CD8-positive, alpha-beta memory T cell (primary cell): ENCODE measurements at regions of chr15 and their contacts with region 1.

Region 1: DNA sequence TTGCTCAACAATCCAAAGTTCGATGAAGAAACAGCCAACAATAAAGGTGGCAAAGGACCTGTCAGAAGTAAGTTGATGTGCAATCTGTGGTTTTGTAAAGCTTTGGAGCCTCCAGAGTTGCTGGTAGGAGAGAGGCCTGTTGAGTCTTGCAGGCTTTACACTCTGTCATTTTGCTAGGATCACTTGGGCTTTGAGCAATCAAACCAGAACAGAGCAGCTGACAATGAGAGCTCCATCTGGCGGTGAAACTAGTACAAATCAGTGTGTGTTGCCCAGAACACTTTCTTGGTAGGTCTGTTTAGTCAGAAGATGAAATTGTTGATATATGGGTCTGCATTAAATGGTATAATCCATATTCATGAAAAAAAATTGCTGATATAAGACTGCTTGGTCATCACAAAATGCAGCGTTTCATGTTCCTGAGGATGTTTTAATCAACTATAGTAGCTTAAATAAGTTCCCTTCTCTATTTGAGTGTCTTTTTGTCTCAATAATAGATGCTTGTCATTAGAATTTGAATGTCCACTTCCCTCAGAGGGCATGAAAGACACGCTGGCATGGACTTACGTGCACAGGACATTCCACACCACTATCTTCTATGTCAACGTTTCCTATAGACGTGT is 25.7 kb downstream of the TMOD2 start:
- DNase-seq: peak; percentile 37 to 72 (median 47)
- H3K4me3 ChIP-seq: no peak overlapping the region
- H3K4me3 Mint-ChIP-seq: no peak overlapping the region
- H3K27ac ChIP-seq: no peak overlapping the region
- H3K27ac Mint-ChIP-seq: no peak overlapping the region
- H3K4me1 ChIP-seq: no peaks in the 10 kb centered on the region
- H3K4me1 Mint-ChIP-seq: peaks cover 5 to 11% (median 6%) of the 10 kb centered on the region in 3 donors
- H3K27me3 ChIP-seq: no peaks in the 10 kb centered on the region
- H3K27me3 Mint-ChIP-seq: no peaks in the 10 kb centered on the region

Region 2: DNA sequence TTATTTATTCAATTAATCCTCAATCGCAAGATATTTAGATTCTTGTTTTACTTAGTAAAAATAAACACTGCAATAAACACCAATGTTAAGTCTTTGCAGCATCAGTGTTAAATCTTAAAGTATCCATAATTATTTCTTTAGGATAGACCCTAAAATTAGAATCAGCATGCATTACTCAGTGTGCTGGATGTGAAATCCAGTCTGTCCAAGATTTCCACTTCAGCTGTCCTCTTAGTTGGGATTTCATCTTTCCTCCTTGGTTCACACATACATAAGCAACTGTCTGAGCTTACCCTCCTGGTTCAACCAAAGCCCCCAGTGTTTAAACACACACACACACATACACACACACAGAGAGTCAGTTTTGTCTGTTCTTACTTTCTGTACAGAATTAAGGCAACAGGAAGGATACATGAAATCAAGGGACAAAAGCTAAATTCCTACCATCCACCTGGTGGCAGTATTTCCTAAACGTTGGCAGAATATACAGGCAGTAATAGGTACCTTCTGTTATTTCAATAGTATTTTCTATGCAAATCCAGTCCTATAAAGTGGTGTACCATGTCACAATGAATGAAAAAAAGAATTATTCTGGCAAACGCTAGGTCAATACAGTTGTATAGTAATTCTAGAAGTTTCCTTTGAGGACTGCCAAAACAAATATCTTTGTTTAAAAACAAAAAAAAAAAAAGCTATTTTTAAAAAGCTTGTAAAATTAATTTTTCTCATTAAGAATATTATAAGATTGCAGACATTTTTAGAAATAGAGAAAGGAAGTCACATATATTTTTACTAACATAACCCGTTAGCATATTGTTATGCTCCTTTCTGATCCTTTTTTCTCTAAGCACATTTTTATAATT is 127.2 kb before region 1 on chr15:
- CTCF ChIA-PET with region 1: interaction called, 97 read pairs
- POLR2A ChIA-PET with region 1: interaction called, 5 read pairs
- DNase-seq: peak in 4 of 5 donors; percentile 6 to 65 (median 44)
- H3K4me3 ChIP-seq: no peak overlapping the region
- H3K4me3 Mint-ChIP-seq: no peak overlapping the region
- H3K27ac ChIP-seq: no peak overlapping the region
- H3K27ac Mint-ChIP-seq: no peak overlapping the region
- H3K4me1 ChIP-seq: no peaks in the 10 kb centered on the region
- H3K4me1 Mint-ChIP-seq: no peaks in the 10 kb centered on the region
- H3K27me3 ChIP-seq: no peaks in the 10 kb centered on the region
- H3K27me3 Mint-ChIP-seq: peaks cover 0 to 5% of the 10 kb centered on the region in 2 donors

Region 3: DNA sequence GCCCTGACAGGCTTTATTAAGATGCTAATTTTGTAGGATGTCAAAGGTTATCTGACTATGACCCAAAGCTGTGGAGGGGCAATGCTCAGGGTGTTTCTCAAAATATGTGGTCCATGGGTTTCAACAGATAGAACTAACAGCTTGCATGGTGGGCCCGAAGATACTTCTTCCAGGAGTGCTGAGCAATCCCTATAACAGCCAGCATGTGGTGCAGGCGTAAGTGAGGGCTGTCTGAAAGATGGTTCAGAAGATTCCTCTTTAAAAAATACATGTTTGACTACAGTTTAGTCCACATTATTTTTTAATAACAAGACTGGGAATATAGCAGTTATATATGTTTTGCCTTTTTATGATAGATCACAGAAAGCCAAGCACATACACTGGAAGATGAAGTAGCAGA is 88.2 kb before region 1 on chr15:
- CTCF ChIA-PET with region 1: interaction called, 11 read pairs
- POLR2A ChIA-PET with region 1: no interaction called
- DNase-seq: no peak
- H3K4me3 ChIP-seq: no peak overlapping the region
- H3K4me3 Mint-ChIP-seq: no peak overlapping the region
- H3K27ac ChIP-seq: no peak overlapping the region
- H3K27ac Mint-ChIP-seq: no peak overlapping the region
- H3K4me1 ChIP-seq: peaks cover 8% of the 10 kb centered on the region
- H3K4me1 Mint-ChIP-seq: peaks cover 3 to 13% (median 11%) of the 10 kb centered on the region in 3 donors
- H3K27me3 ChIP-seq: peaks cover 4% of the 10 kb centered on the region
- H3K27me3 Mint-ChIP-seq: peaks cover 8 to 52% of the 10 kb centered on the region in 2 donors

Region 4: GRCh38 chr15:51731549-51732267 is 45.4 kb before region 1 on chr15:
- CTCF ChIA-PET with region 1: interaction called, 43 read pairs
- POLR2A ChIA-PET with region 1: interaction called, 3 read pairs
- DNase-seq: peak in 4 of 5 donors; percentile 15 to 65 (median 55)
- H3K4me3 ChIP-seq: peak overlapping the region; percentile 59
- H3K4me3 Mint-ChIP-seq: peak overlapping the region; percentile 79 to 92 (median 86)
- H3K27ac ChIP-seq: peak overlapping the region; percentile 65
- H3K27ac Mint-ChIP-seq: peak overlapping the region; percentile 90 to 99 (median 97)
- H3K4me1 ChIP-seq: peaks cover 85% of the 10 kb centered on the region
- H3K4me1 Mint-ChIP-seq: peaks cover 83 to 97% (median 95%) of the 10 kb centered on the region in 3 donors
- H3K27me3 ChIP-seq: no peaks in the 10 kb centered on the region
- H3K27me3 Mint-ChIP-seq: no peaks in the 10 kb centered on the region

Region 5: GRCh38 chr15:51935466-51936104 is 158.5 kb after region 1 on chr15:
- CTCF ChIA-PET with region 1: no interaction called
- POLR2A ChIA-PET with region 1: no interaction called
- DNase-seq: no peak
- H3K4me3 ChIP-seq: no peak overlapping the region
- H3K4me3 Mint-ChIP-seq: no peak overlapping the region
- H3K27ac ChIP-seq: no peak overlapping the region
- H3K27ac Mint-ChIP-seq: peak overlapping the region in 7 of 8 donors; percentile 2 to 66 (median 39)
- H3K4me1 ChIP-seq: no peaks in the 10 kb centered on the region
- H3K4me1 Mint-ChIP-seq: peaks cover 0 to 1% (median 0%) of the 10 kb centered on the region in 3 donors
- H3K27me3 ChIP-seq: no peaks in the 10 kb centered on the region
- H3K27me3 Mint-ChIP-seq: peaks cover 0 to 2% of the 10 kb centered on the region in 2 donors